Heart right ventricle (tissue), 16 donors: ENCODE measurements at regions of chr4 and their contacts with region 1.

Region 1: GRCh38 chr4:25702848-25703247 is 47.2 kb downstream of the SLC34A2 start:
- DNase-seq: peak; percentile 17 to 63
- ATAC-seq: peak; percentile 67 to 94 (median 88)
- H3K4me3 ChIP-seq: no peak overlapping the region
- H3K27ac ChIP-seq: peak overlapping the region in 4 of 10 donors; percentile 27 to 68 (median 42)
- H3K4me1 ChIP-seq: peaks cover 0 to 18% (median 4%) of the 10 kb centered on the region in 9 donors
- H3K27me3 ChIP-seq: no peaks in the 10 kb centered on the region
- CTCF ChIP-seq: peak in 3 of 9 donors; percentile 16 to 31 (median 18)

Region 2: GRCh38 chr4:23819041-23819511 is 1883.8 kb before region 1 on chr4:
- intact Hi-C with region 1: loop called in 1 of 10 experiments (anchors 5 kb)
- DNase-seq: peak in 1 of 2 donors; percentile 19
- ATAC-seq: peak in 7 of 8 donors; percentile 66 to 91 (median 80)
- H3K4me3 ChIP-seq: no peak overlapping the region
- H3K27ac ChIP-seq: peak overlapping the region in 5 of 10 donors; percentile 37 to 78 (median 62)
- H3K4me1 ChIP-seq: peaks cover 0 to 29% (median 18%) of the 10 kb centered on the region in 9 donors
- H3K27me3 ChIP-seq: no peaks in the 10 kb centered on the region
- CTCF ChIP-seq: no peak

Region 3: GRCh38 chr4:25612469-25612868 is 90.4 kb before region 1 on chr4:
- intact Hi-C with region 1: no loop called
- DNase-seq: no peak
- ATAC-seq: no peak
- H3K4me3 ChIP-seq: no peak overlapping the region
- H3K27ac ChIP-seq: no peak overlapping the region
- H3K4me1 ChIP-seq: no peaks in the 10 kb centered on the region
- H3K27me3 ChIP-seq: peaks cover 0 to 26% (median 0%) of the 10 kb centered on the region in 7 donors
- CTCF ChIP-seq: no peak

Region 4: GRCh38 chr4:25949173-25949748 is 246.4 kb after region 1 on chr4:
- intact Hi-C with region 1: no loop called
- DNase-seq: no peak
- ATAC-seq: no peak
- H3K4me3 ChIP-seq: no peak overlapping the region
- H3K27ac ChIP-seq: no peak overlapping the region
- H3K4me1 ChIP-seq: peaks cover 0 to 8% (median 0%) of the 10 kb centered on the region in 9 donors
- H3K27me3 ChIP-seq: peaks cover 0 to 29% (median 13%) of the 10 kb centered on the region in 7 donors
- CTCF ChIP-seq: no peak